Activated naive CD4-positive, alpha-beta T cell treated with anti-CD3 and anti-CD28 coated beads for 36 hours (primary cell): ENCODE measurements at regions of chr18 and their contacts with region 1.

Region 1: DNA sequence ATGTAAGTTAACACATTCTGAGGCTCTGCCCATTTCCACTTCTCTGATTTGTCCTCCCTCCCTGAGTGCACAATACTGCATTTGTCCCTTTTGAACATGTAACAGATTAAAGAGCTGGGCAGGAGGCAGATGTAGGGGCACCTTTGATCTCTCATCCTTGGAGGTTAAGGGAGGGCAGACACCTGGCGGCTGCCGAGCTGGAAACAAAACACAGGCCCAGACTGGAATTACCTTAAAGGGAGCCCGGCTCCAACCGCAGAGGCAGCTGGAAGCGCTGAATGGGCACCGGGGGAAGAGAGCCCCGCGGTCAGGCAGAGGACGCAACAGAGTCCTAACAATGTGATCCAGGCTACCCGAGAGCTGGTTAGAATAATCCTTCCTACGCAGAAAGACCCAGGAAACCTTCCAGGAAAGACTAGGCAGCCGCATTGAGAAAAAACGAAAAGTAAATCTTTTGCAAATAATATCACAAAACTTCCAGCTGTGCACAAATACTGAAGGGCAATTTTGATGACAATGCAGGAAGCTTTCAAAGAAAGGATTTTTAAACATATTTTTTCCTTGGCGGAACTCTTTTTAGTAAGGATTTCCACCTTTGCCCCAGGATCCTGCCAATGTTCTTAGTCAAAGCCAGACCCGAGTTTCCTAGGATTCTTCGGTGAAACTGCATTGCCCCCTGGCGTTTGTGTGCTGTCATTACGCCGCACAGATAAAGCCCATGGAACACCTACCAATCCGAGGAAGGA is 216.0 kb downstream of the TGIF1 start:
- DNase-seq: peak; percentile 84
- H3K4me3 Mint-ChIP-seq: peak overlapping the region; percentile 38
- H3K27ac Mint-ChIP-seq: no peak overlapping the region
- H3K4me1 Mint-ChIP-seq: peaks cover 26% of the 10 kb centered on the region
- H3K27me3 Mint-ChIP-seq: no peaks in the 10 kb centered on the region

Region 2: DNA sequence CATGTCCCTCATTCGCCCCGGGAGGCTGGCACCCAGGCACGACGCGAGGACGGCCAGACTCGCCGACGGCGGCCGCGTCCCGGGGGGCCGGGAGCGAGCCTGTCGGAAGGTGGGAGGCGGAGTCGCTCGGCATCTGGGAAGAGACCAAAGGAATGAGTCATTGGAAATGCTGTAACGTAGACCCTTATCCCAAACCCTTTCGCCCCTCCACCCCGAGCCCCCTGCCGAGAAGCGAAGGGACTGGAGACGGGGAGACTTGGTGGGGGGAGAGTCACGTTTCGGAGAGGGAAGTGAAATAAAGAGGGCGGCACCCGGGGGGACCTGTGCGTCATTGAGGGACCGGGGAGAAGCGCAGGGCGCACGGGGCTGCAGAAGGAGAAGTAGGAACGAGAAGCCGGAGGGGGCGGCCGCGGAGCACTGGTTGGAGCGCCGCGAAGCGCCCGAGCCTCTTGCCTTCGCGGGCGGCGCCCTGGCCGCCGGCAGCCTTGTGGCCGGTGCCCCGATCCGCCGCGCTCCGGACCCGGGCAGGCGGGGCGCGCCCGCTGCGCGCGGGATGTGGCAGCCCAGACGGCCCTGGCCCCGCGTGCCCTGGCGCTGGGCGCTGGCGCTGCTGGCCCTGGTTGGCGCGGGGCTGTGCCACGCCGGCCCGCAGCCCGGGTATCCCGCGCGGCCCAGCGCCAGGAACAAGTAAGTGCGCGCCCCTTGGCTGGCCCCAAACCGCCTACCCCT is 819.2 kb before region 1 on chr18 and contains the start of gene EMILIN2:
- CTCF ChIA-PET with region 1: no interaction called
- intact Hi-C with region 1: no loop called
- DNase-seq: peak; percentile 64
- H3K4me3 Mint-ChIP-seq: peak within 1 kb of the TSS; percentile 83
- H3K27ac Mint-ChIP-seq: peak within 1 kb of the TSS; percentile 61
- H3K4me1 Mint-ChIP-seq: peaks cover 18% of the 10 kb centered on the region
- H3K27me3 Mint-ChIP-seq: peaks cover 31% of the 10 kb centered on the region
- total RNA-seq, gene EMILIN2: 12.2 to 13.2 TPM

Region 3: GRCh38 chr18:2994603-2995432 is 671.1 kb before region 1 on chr18:
- CTCF ChIA-PET with region 1: no interaction called
- intact Hi-C with region 1: loop called (anchors 10 kb)
- DNase-seq: peak; percentile 85
- H3K4me3 Mint-ChIP-seq: no peak overlapping the region
- H3K27ac Mint-ChIP-seq: peak overlapping the region; percentile 78
- H3K4me1 Mint-ChIP-seq: peaks cover 91% of the 10 kb centered on the region
- H3K27me3 Mint-ChIP-seq: no peaks in the 10 kb centered on the region

Region 4: GRCh38 chr18:3029215-3029952 is 636.6 kb before region 1 on chr18:
- CTCF ChIA-PET with region 1: no interaction called
- intact Hi-C with region 1: no loop called
- DNase-seq: no peak
- H3K4me3 Mint-ChIP-seq: no peak overlapping the region
- H3K27ac Mint-ChIP-seq: no peak overlapping the region
- H3K4me1 Mint-ChIP-seq: peaks cover 2% of the 10 kb centered on the region
- H3K27me3 Mint-ChIP-seq: no peaks in the 10 kb centered on the region

Region 5: DNA sequence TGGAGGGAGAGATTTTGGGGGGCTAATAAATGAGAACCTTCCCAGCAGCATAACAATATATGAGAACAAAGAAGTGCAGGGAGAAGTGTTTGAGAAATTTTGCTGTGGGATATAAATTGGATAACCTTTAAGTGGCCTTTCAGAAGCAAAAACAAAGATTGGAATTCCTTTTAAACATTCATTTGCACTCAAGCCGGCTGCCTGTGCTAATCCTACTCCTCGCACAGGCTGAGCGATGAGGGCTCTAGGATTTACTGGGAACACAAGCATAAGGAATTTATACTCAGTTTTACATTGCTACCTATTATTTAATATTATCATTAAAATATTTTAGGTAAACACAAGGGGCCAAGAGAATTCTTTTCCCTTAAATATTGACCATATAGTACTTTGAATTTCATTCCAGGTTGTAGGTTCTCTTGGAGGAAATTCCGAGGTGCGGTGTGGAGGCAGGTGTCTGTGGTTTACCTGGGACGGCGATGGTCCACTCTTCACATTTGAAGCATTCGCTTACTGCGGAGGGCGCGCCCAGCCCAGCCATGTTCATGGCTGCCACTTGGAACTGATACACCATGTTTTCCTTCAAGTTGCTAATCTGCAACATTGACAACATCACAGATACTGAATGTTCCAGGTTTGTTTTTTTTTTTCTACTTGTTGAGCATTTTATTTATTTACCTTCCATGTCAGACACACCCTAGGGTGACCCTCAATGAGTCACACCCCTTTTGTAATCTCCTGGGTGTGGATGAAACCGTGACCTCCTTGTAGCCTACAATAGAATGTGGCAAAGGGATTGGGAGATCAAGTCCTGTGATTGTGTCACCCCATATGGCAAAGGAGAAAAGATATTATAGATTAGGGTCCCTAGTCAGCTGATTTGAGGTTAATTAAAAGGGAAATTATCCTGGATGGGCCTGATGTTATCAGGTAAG is 546.3 kb before region 1 on chr18:
- CTCF ChIA-PET with region 1: no interaction called
- intact Hi-C with region 1: no loop called
- DNase-seq: no peak
- H3K4me3 Mint-ChIP-seq: no peak overlapping the region
- H3K27ac Mint-ChIP-seq: no peak overlapping the region
- H3K4me1 Mint-ChIP-seq: no peaks in the 10 kb centered on the region
- H3K27me3 Mint-ChIP-seq: no peaks in the 10 kb centered on the region

Region 6: GRCh38 chr18:3261371-3262246 is 404.3 kb before region 1 on chr18 and contains the start of gene MYL12B:
- CTCF ChIA-PET with region 1: interaction called, 10 read pairs
- intact Hi-C with region 1: no loop called
- DNase-seq: peak; percentile 79
- H3K4me3 Mint-ChIP-seq: peak within 1 kb of the TSS; percentile 92
- H3K27ac Mint-ChIP-seq: peak within 1 kb of the TSS; percentile 97
- H3K4me1 Mint-ChIP-seq: peaks cover 64% of the 10 kb centered on the region
- H3K27me3 Mint-ChIP-seq: no peaks in the 10 kb centered on the region
- total RNA-seq, gene MYL12B: 288 to 293 TPM

Region 7: DNA sequence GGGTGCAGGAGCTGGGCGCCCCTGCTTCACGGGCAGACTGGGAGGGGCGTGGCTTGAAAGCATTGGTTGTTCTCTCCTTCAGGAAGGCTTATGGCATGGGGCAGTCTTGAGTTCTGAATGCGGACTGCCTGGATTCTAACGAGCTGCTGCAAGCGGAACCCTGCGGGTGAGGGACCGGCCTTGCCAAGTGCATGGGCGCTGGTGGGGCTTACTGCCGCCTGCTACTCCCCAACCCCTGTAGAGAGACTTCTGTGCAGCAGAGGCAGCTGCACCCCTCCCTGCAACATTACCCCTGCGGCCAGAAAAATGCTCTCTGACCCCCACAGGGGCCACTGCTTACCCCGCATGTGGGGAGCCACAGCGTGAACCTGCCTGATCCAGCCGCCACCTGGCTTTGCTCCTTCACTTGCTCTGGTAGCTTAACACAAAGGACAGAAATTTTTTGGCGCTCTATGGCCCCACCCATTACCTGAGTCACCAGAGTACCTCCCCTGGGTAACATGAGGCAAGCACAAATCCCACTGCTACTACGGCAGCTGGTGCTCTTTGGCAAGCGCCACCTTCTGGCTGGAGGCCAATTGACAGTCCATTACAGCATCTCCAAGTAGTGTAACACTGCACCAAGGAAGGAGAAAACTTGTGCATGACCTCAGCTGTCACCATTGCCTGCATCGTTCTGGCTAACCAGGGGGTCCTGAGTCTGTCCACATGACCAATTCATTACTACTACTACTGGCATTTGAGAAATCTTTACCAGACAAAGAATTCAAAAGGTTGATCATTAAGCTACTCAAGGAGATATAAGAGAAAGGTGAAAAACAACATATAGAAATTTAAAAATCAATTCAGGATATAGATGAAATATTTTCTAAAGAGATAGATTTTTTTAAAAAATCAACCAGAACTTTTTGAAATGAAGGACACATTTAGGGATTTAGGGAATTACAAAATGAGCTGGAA is 368.6 kb before region 1 on chr18:
- CTCF ChIA-PET with region 1: interaction called, 49 read pairs
- intact Hi-C with region 1: loop called (anchors 5 kb)
- DNase-seq: peak; percentile 98
- H3K4me3 Mint-ChIP-seq: peak overlapping the region; percentile 93
- H3K27ac Mint-ChIP-seq: peak overlapping the region; percentile 79
- H3K4me1 Mint-ChIP-seq: peaks cover 3% of the 10 kb centered on the region
- H3K27me3 Mint-ChIP-seq: peaks cover 11% of the 10 kb centered on the region

Region 8: DNA sequence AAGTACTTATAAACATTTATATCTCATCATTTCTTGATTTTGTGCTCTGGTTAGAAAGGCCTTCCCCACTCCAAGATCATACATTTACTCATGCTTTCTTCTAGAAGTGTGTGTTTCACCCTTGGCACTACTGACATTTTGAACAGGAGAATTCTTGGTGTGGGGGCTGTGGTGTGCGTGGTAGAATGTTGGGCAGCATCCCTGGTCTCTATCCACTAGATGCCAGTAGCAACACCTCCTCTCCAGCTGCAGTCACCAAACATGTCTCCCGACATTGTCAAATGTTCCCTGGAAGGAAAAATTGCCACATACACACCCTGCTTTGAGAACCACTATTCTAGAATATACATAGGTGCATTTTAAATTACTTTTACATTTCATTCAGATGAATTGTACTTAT is 224.7 kb before region 1 on chr18:
- CTCF ChIA-PET with region 1: interaction called, 15 read pairs
- intact Hi-C with region 1: no loop called
- DNase-seq: peak; percentile 46
- H3K4me3 Mint-ChIP-seq: no peak overlapping the region
- H3K27ac Mint-ChIP-seq: no peak overlapping the region
- H3K4me1 Mint-ChIP-seq: peaks cover 3% of the 10 kb centered on the region
- H3K27me3 Mint-ChIP-seq: no peaks in the 10 kb centered on the region

Region 9: GRCh38 chr18:3585656-3586509 is 80.1 kb before region 1 on chr18:
- CTCF ChIA-PET with region 1: interaction called, 36 read pairs
- intact Hi-C with region 1: loop called (anchors 1 kb)
- DNase-seq: peak; percentile 88
- H3K4me3 Mint-ChIP-seq: no peak overlapping the region
- H3K27ac Mint-ChIP-seq: peak overlapping the region; percentile 1
- H3K4me1 Mint-ChIP-seq: peaks cover 36% of the 10 kb centered on the region
- H3K27me3 Mint-ChIP-seq: no peaks in the 10 kb centered on the region

Region 10: GRCh38 chr18:3623769-3624545 is 42.0 kb before region 1 on chr18:
- CTCF ChIA-PET with region 1: interaction called, 7 read pairs
- intact Hi-C with region 1: loop called (anchors 2 kb)
- DNase-seq: peak; percentile 44
- H3K4me3 Mint-ChIP-seq: peak overlapping the region; percentile 28
- H3K27ac Mint-ChIP-seq: peak overlapping the region; percentile 86
- H3K4me1 Mint-ChIP-seq: peaks cover 32% of the 10 kb centered on the region
- H3K27me3 Mint-ChIP-seq: no peaks in the 10 kb centered on the region

Region 11: DNA sequence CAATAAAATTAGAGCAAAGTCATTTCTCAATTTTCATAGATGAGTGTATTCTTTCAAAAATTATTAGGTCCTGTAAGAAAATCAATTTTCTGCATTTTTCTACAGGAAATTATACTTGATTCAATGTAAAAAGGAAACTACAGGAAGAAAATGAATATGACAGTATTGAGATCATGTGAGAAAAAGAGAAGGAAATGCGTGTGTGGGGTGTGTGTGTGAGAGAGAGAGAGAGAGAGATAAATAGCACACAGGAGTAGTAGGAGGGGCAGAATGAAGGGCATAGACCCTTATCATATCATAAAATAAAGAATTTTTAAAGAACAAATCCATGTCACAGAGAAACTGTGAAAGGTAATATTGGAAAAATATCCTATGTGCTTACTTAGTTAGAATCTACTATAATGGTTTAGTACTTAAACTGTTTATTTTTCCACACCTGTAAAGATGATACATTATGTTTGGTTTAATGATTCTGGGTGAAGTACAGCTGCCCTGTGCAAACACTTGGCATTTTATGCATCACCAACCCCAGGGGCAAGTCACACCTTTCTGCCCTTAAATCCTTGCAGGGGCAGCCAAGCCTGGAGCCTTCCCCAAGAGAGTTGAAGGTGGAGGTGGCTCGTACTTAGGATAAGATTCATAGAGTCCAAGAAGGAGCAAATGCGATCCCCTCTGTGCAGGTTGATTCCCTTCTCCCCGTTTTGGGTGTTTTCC is 60.4 kb after region 1 on chr18:
- CTCF ChIA-PET with region 1: no interaction called
- intact Hi-C with region 1: no loop called
- DNase-seq: no peak
- H3K4me3 Mint-ChIP-seq: no peak overlapping the region
- H3K27ac Mint-ChIP-seq: no peak overlapping the region
- H3K4me1 Mint-ChIP-seq: no peaks in the 10 kb centered on the region
- H3K27me3 Mint-ChIP-seq: peaks cover 25% of the 10 kb centered on the region